HEK293 (cell line): ENCODE measurements at regions of chr1 and their contacts with region 1.

Region 1: DNA sequence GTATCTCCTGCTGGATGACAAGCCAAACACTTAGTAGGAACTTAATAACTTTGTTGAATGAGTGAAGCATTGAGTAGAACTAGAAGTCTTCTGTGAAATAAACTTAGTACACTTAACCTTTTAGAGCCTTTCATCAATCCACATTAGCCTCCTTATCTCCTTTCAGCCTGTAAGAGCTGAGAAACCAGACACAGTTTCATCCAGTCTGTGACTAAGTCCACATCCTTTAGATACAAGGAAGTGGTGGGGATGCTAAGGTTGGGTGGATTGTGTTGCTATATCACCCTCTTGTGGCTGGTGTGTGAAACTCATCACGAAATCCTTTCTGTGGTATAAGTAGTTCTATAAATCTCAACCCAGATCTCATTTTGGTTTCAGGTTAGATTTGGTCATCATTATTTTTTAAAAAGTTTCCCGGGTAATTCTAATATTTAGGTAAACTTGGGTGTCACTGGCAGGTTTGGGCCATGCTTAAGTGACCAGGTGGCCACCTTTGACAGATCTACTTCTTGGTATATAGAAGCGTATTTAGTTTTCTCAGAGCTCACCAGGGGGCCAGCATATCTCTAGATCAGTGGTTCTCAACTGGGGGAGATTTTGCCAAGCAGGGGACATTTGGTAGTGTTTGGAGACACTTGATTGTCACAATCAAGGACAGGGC is 27.8 kb upstream of the CD84 start:
- H3K4me3 ChIP-seq: no peak overlapping the region
- H3K27ac ChIP-seq: no peak overlapping the region
- H3K4me1 ChIP-seq: no peaks in the 10 kb centered on the region
- CTCF ChIP-seq: peak; percentile 50; the same call in 1 of the 2 replicates

Region 2: GRCh38 chr1:160428655-160429054 is 178.5 kb before region 1 on chr1:
- CTCF ChIA-PET with region 1: interaction called, 24 read pairs
- POLR2A ChIA-PET with region 1: no interaction called
- H3K4me3 ChIP-seq: no peak overlapping the region
- H3K27ac ChIP-seq: no peak overlapping the region
- H3K4me1 ChIP-seq: no peaks in the 10 kb centered on the region
- CTCF ChIP-seq: peak; percentile 65

Region 3: DNA sequence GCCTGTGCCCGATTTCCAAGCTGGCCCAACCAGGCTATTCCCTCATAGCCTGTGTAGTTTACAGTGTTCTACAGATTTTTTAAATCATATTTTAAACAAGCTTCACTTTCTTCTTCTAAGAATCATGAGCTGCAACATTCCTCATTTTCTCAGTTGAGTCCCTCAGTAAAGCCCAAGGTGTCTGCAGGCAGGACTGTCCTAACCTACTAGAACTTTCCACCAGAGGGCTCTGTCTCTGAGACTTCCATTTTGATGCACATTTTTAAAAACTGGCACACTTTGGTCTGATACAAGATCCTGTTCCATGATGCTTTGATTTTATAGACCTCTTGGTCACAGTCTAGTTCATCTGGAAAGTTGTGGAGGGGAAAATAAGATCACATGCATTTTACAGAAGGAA is 62.5 kb before region 1 on chr1:
- CTCF ChIA-PET with region 1: interaction called, 12 read pairs
- POLR2A ChIA-PET with region 1: no interaction called
- H3K4me3 ChIP-seq: no peak overlapping the region
- H3K27ac ChIP-seq: no peak overlapping the region
- H3K4me1 ChIP-seq: no peaks in the 10 kb centered on the region
- CTCF ChIP-seq: 0 out of 2 replicates have a peak, but pooled peaks have one; percentile 23

Region 4: DNA sequence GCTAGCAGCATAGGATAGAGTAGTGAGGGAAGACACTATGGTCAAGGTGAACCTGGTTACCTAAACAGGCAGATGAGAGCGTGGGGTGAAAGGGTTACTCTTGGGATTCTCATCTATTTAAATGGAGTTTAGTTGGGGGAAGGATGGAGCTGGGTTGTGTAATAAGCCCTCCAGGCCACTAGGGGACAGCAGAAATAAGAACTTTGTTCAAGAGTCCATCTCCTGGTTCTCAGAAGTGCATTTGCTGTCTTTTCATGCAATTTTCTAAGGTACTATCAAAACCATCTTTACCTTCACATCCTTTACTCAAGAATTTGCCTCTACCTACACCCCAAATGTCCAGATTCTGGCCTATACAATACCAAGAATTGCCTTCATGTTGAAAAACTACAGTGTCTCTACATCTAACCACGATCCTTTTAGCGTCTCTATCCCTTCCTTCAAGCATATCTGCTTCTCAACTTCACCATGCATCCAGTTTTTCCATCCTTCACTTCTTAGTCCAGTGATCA is 11.7 kb after region 1 on chr1:
- CTCF ChIA-PET with region 1: interaction called, 22 read pairs
- POLR2A ChIA-PET with region 1: no interaction called
- H3K4me3 ChIP-seq: no peak overlapping the region
- H3K27ac ChIP-seq: no peak overlapping the region
- H3K4me1 ChIP-seq: no peaks in the 10 kb centered on the region
- CTCF ChIP-seq: no peak